SK-N-SH (cell line): ENCODE measurements at regions of chr19 and their contacts with region 1.

Region 1: DNA sequence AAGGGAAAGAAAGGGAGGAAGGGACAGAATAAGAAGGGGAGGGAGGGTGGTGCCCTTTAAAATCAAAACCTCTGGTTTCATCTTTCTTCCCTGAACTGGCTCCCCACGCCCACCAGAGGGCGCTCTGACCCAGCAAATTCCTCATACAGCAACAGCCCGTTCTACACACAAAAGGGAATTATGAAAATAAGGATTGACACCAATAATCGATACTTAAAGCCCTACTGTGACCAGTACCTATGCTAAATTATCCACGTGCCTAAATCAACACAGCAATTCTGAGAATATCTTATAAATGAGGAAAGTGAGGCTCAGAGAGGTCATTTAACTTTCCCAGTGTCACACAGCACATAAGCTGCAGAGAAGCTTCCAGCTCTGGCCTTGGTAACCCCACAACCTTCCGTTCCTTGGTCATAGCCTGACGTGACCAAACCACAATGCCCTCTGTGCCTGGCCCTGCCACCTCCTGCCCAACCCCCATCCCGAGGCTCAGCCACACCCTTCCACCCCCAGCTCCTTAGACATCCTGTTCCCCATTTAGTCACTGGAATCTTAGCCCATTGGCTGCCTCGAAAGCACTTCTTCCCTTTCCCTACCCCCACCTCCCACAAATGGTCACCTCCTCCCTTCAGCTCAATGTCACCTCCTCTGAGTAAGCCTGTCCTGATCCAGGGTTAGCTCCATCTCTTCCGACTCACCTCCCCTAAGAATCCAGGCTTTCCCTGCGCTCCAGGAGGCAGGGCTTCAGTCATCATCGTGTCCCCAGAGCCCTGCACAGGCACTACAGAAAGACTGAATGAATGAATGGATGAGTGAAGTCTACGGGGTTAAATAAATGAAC is 34.2 kb upstream of the PNMA8B start:
- DNase-seq: peak; percentile 81
- H3K4me3 ChIP-seq: peak overlapping the region in 1 of 2 experiments; percentile 35; a peak in 1 of 4 replicates
- H3K27ac ChIP-seq: no peak overlapping the region
- H3K4me1 ChIP-seq: peaks cover 0 to 28% of the 10 kb centered on the region in 2 experiments; a peak in 1 of 4 replicates
- H3K27me3 ChIP-seq: no peaks in the 10 kb centered on the region
- CTCF ChIP-seq: peak; percentile 88
- EP300 ChIP-seq: no peak
- RAD21 ChIP-seq: peak; percentile 95

Region 2: GRCh38 chr19:46542428-46543230 is 12.8 kb after region 1 on chr19:
- CTCF ChIA-PET with region 1: interaction called, 99 read pairs
- POLR2A ChIA-PET with region 1: no interaction called
- DNase-seq: peak; percentile 77
- H3K4me3 ChIP-seq: peak overlapping the region in 1 of 2 experiments; percentile 45; a peak in 1 of 4 replicates
- H3K27ac ChIP-seq: no peak overlapping the region
- H3K4me1 ChIP-seq: no peaks in the 10 kb centered on the region; a peak in 1 of 4 replicates
- H3K27me3 ChIP-seq: no peaks in the 10 kb centered on the region
- CTCF ChIP-seq: peak; percentile 94
- EP300 ChIP-seq: no peak
- RAD21 ChIP-seq: peak; percentile 87

Region 3: GRCh38 chr19:46551164-46551563 is 21.3 kb after region 1 on chr19:
- CTCF ChIA-PET with region 1: interaction called, 99 read pairs
- POLR2A ChIA-PET with region 1: no interaction called
- DNase-seq: no peak
- H3K4me3 ChIP-seq: no peak overlapping the region
- H3K27ac ChIP-seq: no peak overlapping the region
- H3K4me1 ChIP-seq: no peaks in the 10 kb centered on the region; a peak in 1 of 4 replicates
- H3K27me3 ChIP-seq: no peaks in the 10 kb centered on the region
- CTCF ChIP-seq: no peak
- EP300 ChIP-seq: no peak
- RAD21 ChIP-seq: no peak

Region 4: GRCh38 chr19:46624958-46625661 is 95.3 kb after region 1 on chr19 and contains the start of gene PTGIR:
- CTCF ChIA-PET with region 1: interaction called, 10 read pairs
- POLR2A ChIA-PET with region 1: interaction called, 3 read pairs
- DNase-seq: peak; percentile 43
- H3K4me3 ChIP-seq: peak within 1 kb of the TSS in 1 of 2 experiments; percentile 52; a peak in 1 of 4 replicates
- H3K27ac ChIP-seq: peak within 1 kb of the TSS; percentile 75 to 97
- H3K4me1 ChIP-seq: peaks cover 16 to 71% of the 10 kb centered on the region in 2 experiments
- H3K27me3 ChIP-seq: no peaks in the 10 kb centered on the region
- CTCF ChIP-seq: no peak
- EP300 ChIP-seq: no peak
- RAD21 ChIP-seq: no peak
- polyA plus RNA-seq, gene PTGIR: 2.5 and 3.3 TPM in 2 replicates